Activated CD4-positive, alpha-beta T cell treated with anti-CD3 and anti-CD28 coated beads, Interleukin-2, amount 10 ng/mL, durations not matched to agents 24 days and 14 days (primary cell): ENCODE measurements at regions of chr17 and their contacts with region 1.

Region 1: GRCh38 chr17:7021993-7022778 is 664 bp upstream of the BCL6B start:
- DNase-seq: peak; percentile 95
- H3K4me3 Mint-ChIP-seq: peak overlapping the region; percentile 68
- H3K27ac Mint-ChIP-seq: peak overlapping the region; percentile 59
- H3K4me1 Mint-ChIP-seq: peaks cover 64% of the 10 kb centered on the region
- H3K27me3 Mint-ChIP-seq: no peaks in the 10 kb centered on the region

Region 2: DNA sequence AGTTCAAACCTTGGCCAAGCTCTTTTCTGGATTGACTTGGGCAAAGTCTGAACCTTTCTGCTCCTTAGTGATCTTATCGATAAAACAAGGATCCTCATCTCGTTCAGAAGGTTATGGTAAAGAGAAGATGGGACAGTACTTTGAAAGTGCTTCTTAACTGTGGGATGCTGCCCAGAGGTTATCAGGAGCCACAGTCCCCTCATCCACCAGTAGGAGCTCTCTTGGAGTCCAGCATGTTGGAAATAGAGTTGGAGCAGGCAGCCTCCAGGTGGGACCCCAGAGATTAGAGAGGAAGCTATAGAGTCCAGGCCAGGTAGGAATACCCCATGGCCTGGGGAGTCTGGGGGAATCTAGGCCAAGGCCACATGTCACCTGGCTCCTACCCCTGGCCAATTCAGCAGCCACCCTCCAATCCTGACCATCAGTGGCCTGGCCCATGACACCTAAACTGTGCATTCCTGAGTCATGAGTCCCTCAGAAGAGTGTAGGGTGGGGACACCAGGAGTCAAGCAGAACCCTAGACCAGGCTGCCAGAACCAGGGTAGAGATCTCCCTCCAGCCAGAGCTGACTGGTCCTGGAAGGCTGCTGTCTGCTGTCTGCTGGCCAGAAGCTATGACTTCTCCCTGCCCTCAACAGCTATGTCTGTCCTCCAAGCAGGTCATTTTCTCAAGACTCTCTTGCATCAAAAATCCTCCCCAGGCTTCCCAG is 731.5 kb before region 1 on chr17:
- intact Hi-C with region 1: no loop called
- DNase-seq: no peak
- H3K4me3 Mint-ChIP-seq: no peak overlapping the region
- H3K27ac Mint-ChIP-seq: no peak overlapping the region
- H3K4me1 Mint-ChIP-seq: no peaks in the 10 kb centered on the region
- H3K27me3 Mint-ChIP-seq: no peaks in the 10 kb centered on the region

Region 3: DNA sequence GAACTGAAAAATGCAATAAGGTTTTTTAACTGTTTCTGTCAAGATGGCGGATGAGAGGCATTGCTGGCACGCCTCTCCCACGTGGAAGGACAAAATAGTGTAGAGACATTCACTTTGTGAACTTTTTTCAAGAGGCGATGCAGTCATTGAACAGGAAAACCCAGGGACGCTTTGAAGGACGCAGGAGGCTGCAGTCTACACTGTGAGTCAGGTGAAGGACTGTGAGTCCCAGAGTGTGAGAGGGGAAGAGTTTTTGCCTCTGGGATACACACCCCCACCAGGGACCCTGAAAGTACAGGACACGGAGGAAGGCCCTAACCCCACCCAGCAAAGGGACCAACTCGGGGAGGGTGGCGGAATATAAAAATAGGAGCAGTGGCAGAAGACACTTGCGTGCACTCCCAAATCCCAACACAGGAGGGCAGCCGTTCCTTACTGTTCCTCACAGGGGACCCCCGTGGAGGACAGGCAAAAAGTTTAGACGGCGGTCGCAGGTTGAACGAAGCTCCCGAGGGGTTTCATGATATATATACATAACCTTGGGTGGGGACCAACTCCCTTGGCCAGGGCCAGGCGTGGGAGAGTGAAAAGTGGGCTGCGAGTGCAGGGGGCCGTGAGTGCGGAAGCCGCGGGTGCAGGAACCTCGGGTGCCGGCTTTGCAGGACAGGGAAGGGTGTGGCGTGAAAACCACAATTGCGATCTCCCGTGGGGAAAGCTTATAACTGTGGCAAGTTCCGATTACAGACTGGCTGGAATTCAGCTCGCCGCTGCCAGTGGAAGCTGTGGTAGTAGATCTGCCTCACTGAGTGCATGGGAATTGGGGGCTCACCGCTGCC is 108.4 kb before region 1 on chr17:
- intact Hi-C with region 1: loop called (anchors 1 kb)
- DNase-seq: peak; percentile 92
- H3K4me3 Mint-ChIP-seq: peak overlapping the region; percentile 82
- H3K27ac Mint-ChIP-seq: no peak overlapping the region
- H3K4me1 Mint-ChIP-seq: peaks cover 20% of the 10 kb centered on the region
- H3K27me3 Mint-ChIP-seq: peaks cover 32% of the 10 kb centered on the region

Region 4: GRCh38 chr17:7035591-7036368 is 13.6 kb after region 1 on chr17 and contains the start of gene SLC16A13:
- intact Hi-C with region 1: loop called (anchors 1 kb)
- DNase-seq: peak; percentile 100
- H3K4me3 Mint-ChIP-seq: peak within 1 kb of the TSS; percentile 98
- H3K27ac Mint-ChIP-seq: peak within 1 kb of the TSS; percentile 99
- H3K4me1 Mint-ChIP-seq: peaks cover 51% of the 10 kb centered on the region
- H3K27me3 Mint-ChIP-seq: no peaks in the 10 kb centered on the region
- total RNA-seq, gene SLC16A13: 12.4 and 13.5 TPM in 2 replicates

Region 5: DNA sequence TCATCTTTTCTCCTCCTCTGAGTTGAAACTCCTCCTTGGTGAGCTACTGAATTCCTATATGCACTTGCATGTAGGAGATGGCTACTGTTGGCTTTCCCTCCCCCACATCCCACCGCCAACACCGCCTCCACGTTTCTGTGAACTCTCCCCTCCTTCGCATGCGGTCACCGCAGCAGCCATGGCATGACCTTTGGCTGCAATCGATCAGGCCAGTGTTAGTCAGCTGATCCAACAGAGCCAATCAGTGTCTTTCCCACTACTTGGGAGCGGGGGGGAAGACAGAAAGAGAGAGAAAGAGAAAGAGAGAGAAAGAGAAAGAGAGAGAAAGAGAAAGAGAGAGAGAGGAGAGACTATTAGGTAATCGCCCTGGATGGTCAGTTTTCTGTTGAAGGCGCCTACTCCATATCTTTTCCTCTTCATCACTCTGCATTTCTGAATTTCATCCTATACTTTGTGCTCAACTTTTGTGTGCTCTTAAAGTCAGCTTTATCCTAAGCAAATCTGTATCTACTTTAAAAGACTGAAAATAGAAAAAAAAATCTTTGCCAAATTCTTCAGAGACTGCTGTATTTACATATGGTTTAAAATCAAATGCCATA is 134.3 kb after region 1 on chr17:
- intact Hi-C with region 1: no loop called
- DNase-seq: no peak
- H3K4me3 Mint-ChIP-seq: no peak overlapping the region
- H3K27ac Mint-ChIP-seq: no peak overlapping the region
- H3K4me1 Mint-ChIP-seq: no peaks in the 10 kb centered on the region
- H3K27me3 Mint-ChIP-seq: peaks cover 37% of the 10 kb centered on the region